Activated CD4-positive, alpha-beta memory T cell treated with anti-CD3 and anti-CD28 coated beads for 36 hours (primary cell): ENCODE measurements at regions of chr16 and their contacts with region 1.

Region 1: DNA sequence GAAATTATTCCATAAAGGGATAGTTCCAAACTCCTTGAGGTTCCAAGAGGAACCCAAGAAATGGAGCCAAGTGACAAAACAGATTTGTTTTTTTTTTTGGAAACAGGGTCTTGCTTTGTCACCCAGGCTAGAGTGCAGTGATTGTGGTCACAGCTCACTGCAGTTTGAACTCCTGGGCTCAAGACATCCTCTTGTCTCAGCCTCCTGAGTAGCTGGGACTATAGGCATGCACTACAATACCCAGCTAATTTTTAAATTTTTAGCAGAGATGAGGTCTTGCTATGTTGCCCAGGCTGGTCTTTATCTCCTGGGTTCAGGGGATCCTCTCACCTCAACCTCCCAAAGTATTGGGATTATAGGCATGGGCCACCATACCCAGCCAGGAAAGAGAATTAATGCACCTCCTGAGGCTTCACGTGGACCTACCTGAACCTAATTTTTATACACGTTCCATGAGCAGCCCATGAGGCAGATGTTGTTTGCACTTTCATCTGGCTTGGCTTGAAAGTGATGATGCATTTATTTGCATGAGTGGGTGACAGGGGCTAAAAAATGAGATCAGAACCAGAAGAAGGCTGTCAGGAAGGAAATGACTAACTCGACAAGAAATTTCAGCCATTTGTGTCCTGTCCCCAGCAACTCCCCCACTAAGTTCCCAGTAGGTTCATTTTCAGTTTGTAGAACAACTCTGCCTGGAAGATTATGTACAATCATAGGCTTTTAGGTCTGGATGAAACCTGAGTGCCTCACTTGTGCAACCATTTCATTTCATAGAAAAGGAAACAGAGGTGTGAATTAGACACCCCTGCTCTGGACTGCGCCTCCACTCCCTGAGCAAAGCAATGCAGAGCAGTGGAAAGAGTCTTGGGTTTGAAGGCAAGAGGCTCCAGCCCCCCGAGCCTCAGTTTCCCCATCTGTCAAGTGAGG is 10.3 kb upstream of the IRF8 start:
- DNase-seq: peak; percentile 57
- H3K4me3 Mint-ChIP-seq: no peak overlapping the region
- H3K27ac Mint-ChIP-seq: peak overlapping the region; percentile 52
- H3K4me1 Mint-ChIP-seq: peaks cover 27% of the 10 kb centered on the region
- H3K27me3 Mint-ChIP-seq: peaks cover 29% of the 10 kb centered on the region

Region 2: DNA sequence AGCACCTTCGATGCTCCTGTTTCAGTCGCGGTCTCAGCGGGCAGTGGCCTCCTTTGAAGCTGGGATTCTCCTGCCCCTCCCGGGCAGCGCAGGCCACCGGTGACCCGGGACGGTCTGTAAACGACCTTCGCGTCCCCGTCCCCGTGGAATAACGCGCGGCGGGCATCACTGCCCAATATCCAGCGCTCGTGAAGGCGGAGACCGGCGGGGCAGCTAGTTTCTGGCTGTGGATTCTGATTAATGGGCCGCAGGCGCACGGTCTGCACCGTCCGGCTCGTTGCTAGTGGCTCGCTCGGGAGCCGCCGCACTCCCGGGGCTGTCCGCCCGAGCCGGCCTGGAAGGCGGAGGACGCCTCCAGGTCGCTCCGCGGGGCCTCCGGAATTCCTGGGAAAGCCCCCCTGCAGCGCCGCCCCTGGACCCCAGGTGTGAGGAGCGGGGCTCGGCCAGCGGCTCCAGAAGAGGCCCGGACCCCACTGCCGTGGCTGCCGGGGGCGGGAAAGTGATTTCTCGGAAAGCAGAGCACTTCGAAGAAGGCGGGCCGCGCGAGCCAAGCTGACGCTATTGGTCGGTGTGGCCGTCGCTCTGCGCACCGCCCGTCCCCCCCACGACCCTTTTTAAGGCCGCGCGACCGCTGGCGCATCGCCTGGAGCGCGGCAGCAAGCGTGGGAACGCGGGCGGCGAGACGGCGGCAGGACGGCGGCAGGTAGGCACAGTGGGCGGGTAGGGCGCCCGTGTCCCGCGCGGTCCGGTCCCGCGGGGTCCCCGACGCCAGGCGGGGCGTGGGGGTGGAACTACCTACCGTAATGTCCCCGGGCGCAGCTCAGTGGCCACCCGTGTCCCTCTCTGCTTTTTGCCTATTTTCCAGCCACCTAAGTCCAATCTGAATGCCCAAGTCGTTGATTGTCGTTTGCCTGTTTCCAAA is 10.1 kb after region 1 on chr16 and contains the start of gene IRF8:
- CTCF ChIA-PET with region 1: no interaction called
- POLR2A ChIA-PET with region 1: interaction called, 3 read pairs
- intact Hi-C with region 1: loop called (anchors 1 kb)
- DNase-seq: peak; percentile 80
- H3K4me3 Mint-ChIP-seq: peak within 1 kb of the TSS; percentile 82
- H3K27ac Mint-ChIP-seq: peak within 1 kb of the TSS; percentile 76
- H3K4me1 Mint-ChIP-seq: peaks cover 40% of the 10 kb centered on the region
- H3K27me3 Mint-ChIP-seq: peaks cover 28% of the 10 kb centered on the region
- total RNA-seq, gene IRF8: 41.7 to 43.1 TPM

Region 3: GRCh38 chr16:85947230-85948137 is 58.8 kb after region 1 on chr16:
- CTCF ChIA-PET with region 1: no interaction called
- POLR2A ChIA-PET with region 1: no interaction called
- intact Hi-C with region 1: loop called (anchors 2 kb)
- DNase-seq: peak; percentile 77
- H3K4me3 Mint-ChIP-seq: peak overlapping the region; percentile 45
- H3K27ac Mint-ChIP-seq: peak overlapping the region; percentile 54
- H3K4me1 Mint-ChIP-seq: peaks cover 49% of the 10 kb centered on the region
- H3K27me3 Mint-ChIP-seq: peaks cover 32% of the 10 kb centered on the region